ENCODE measurements at regions of chr2 and their contacts with region 1.

Region 1: GRCh38 chr2:233185963-233186362 is 65.5 kb upstream of the ATG16L1 start:
- DNase-seq: no peak
- CTCF ChIP-seq: no peak

Region 2: DNA sequence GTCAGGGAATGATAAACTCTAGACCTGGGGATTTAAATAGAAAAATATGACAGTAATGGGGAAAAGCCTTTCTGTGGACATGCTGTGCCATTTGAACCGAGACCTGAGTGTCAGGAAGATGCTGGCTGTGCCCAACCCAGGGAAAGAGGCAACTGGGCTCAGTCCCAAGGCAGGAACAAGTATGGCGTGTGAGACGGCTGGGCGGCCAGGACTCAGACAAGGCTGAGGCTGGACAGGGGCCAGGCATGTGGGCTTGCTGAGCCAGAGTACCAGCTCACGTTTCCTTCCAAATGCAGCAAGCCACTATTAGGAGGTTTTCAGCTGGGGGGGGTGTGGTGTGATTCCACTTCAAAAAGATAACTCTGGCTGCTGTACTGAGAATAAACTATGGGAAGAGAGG is 33.4 kb before region 1 on chr2:
- CTCF ChIA-PET with region 1: no interaction called
- POLR2A ChIA-PET with region 1: no interaction called
- DNase-seq: no peak
- CTCF ChIP-seq: no peak

Region 3: DNA sequence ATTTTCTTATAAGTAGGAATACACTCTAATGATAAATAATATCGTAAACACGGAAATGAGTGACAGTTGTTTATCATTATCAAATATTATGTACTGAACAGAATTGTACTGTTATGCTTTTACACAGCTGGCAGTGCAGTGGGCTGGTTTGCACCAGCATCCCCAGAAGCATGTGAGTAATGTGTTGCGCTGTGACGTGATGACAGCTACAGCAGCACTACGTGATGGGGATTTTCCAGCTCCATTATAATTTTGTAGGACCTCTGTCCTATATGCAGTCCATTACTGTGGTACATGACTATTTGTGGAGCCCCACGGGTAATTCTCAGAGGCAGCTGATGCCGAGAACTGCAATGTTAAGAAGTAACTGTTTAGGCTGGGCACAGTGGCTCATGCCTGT is 11.8 kb before region 1 on chr2:
- CTCF ChIA-PET with region 1: interaction called, 10 read pairs
- POLR2A ChIA-PET with region 1: interaction called, 3 read pairs
- DNase-seq: no peak
- CTCF ChIP-seq: no peak